ENCODE measurements at regions of chr22 and their contacts with region 1.

Region 1: GRCh38 chr22:30634471-30635233 is 929 bp upstream of the SLC35E4 start:
- DNase-seq: peak; percentile 78 to 85
- ATAC-seq: peak; percentile 75 to 77
- H3K4me3 ChIP-seq: peak overlapping the region; percentile 67 to 96 (median 78)
- H3K27ac ChIP-seq: peak overlapping the region; percentile 95 to 99 (median 98)
- H3K4me1 ChIP-seq: peaks cover 36 to 39% of the 10 kb centered on the region in 2 donors
- H3K27me3 ChIP-seq: no peaks in the 10 kb centered on the region
- CTCF ChIP-seq: peak; percentile 95 to 99 (median 97)
- POLR2A ChIP-seq: peak in 1 of 2 donors; percentile 54

Region 2: GRCh38 chr22:30386960-30387827 is 247.5 kb before region 1 on chr22 and contains the start of gene RNF215:
- in situ Hi-C with region 1: no loop called
- intact Hi-C with region 1: no loop called
- DNase-seq: peak; percentile 50 to 66
- ATAC-seq: peak; percentile 93 to 95
- H3K4me3 ChIP-seq: peak within 1 kb of the TSS; percentile 62 to 73 (median 66)
- H3K27ac ChIP-seq: peak within 1 kb of the TSS; percentile 58 to 71 (median 64)
- H3K4me1 ChIP-seq: peaks cover 7% of the 10 kb centered on the region in 2 donors
- H3K27me3 ChIP-seq: no peaks in the 10 kb centered on the region
- CTCF ChIP-seq: peak; percentile 86 to 98 (median 97)
- POLR2A ChIP-seq: no peak
- total RNA-seq, gene RNF215: 4.7 to 11.2 (median 8.1) TPM

Region 3: GRCh38 chr22:30606455-30607299 is 28.0 kb before region 1 on chr22 and contains the start of gene TCN2:
- in situ Hi-C with region 1: no loop called
- intact Hi-C with region 1: loop called (anchors 2 kb)
- DNase-seq: peak; percentile 63 to 69
- ATAC-seq: peak; percentile 87 to 88
- H3K4me3 ChIP-seq: peak within 1 kb of the TSS; percentile 68 to 84 (median 73)
- H3K27ac ChIP-seq: peak within 1 kb of the TSS; percentile 53 to 87 (median 76)
- H3K4me1 ChIP-seq: peaks cover 28 to 31% of the 10 kb centered on the region in 2 donors
- H3K27me3 ChIP-seq: no peaks in the 10 kb centered on the region
- CTCF ChIP-seq: peak in 1 of 5 experiments; percentile 29
- POLR2A ChIP-seq: peak; percentile 19 to 31
- total RNA-seq, gene TCN2: 5.1 to 12.8 (median 11.7) TPM

Region 4: GRCh38 chr22:30694171-30694639 is 59.6 kb after region 1 on chr22:
- in situ Hi-C with region 1: loop called in 1 of 4 experiments (anchors 10 kb)
- intact Hi-C with region 1: loop called (anchors 2 kb)
- DNase-seq: peak; percentile 25 to 40
- ATAC-seq: peak; percentile 70 to 71
- H3K4me3 ChIP-seq: peak overlapping the region; percentile 53 to 75 (median 67)
- H3K27ac ChIP-seq: peak overlapping the region; percentile 48 to 86 (median 74)
- H3K4me1 ChIP-seq: peaks cover 5 to 7% of the 10 kb centered on the region in 2 donors
- H3K27me3 ChIP-seq: no peaks in the 10 kb centered on the region
- CTCF ChIP-seq: no peak
- POLR2A ChIP-seq: no peak

Region 5: GRCh38 chr22:30910358-30910757 is 275.7 kb after region 1 on chr22:
- in situ Hi-C with region 1: loop called in 2 of 4 experiments (anchors 10 to 25 kb)
- intact Hi-C with region 1: no loop called
- DNase-seq: no peak
- ATAC-seq: no peak
- H3K4me3 ChIP-seq: no peak overlapping the region
- H3K27ac ChIP-seq: no peak overlapping the region
- H3K4me1 ChIP-seq: no peaks in the 10 kb centered on the region
- H3K27me3 ChIP-seq: no peaks in the 10 kb centered on the region
- CTCF ChIP-seq: no peak
- POLR2A ChIP-seq: no peak

Region 6: GRCh38 chr22:30968924-30969539 is 334.4 kb after region 1 on chr22 and contains the start of gene TUG1:
- in situ Hi-C with region 1: no loop called
- intact Hi-C with region 1: loop called (anchors 1 kb)
- DNase-seq: peak; percentile 99
- ATAC-seq: peak; percentile 91 to 94
- H3K4me3 ChIP-seq: peak within 1 kb of the TSS; percentile 61 to 95 (median 88)
- H3K27ac ChIP-seq: peak within 1 kb of the TSS; percentile 89 to 98 (median 98)
- H3K4me1 ChIP-seq: peaks cover 67 to 69% of the 10 kb centered on the region in 2 donors
- H3K27me3 ChIP-seq: no peaks in the 10 kb centered on the region
- CTCF ChIP-seq: peak in 2 of 5 experiments; percentile 32 to 33
- POLR2A ChIP-seq: peak; percentile 93 to 97
- total RNA-seq, gene TUG1: 14.3 to 23.9 (median 15.8) TPM

Region 7: DNA sequence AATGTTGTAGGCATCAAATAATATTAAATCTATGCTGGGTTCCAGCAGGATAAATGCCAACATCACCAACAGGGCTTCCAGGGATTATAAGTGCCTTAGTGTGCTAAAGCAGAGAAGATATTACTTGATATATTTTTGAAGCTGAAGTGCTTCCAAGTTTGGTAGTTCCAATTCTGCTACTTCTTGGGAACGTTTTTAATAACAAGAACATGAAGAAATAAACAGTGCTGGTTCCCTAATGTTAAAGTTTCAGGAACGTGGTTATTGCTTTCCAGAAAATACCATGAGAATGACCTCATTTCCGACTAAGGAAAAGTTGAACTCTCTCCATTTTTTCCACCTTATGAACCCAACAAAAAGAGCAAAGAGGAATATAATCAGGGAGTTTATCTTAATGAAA is 520.8 kb after region 1 on chr22:
- in situ Hi-C with region 1: no loop called
- intact Hi-C with region 1: loop called (anchors 1 kb)
- DNase-seq: no peak
- ATAC-seq: no peak
- H3K4me3 ChIP-seq: no peak overlapping the region
- H3K27ac ChIP-seq: peak overlapping the region; percentile 3 to 53 (median 32)
- H3K4me1 ChIP-seq: peaks cover 0 to 15% of the 10 kb centered on the region in 2 donors
- H3K27me3 ChIP-seq: no peaks in the 10 kb centered on the region
- CTCF ChIP-seq: no peak
- POLR2A ChIP-seq: no peak

Region 8: GRCh38 chr22:31290494-31291471 is 656.1 kb after region 1 on chr22:
- in situ Hi-C with region 1: no loop called
- intact Hi-C with region 1: loop called (anchors 1 kb)
- DNase-seq: peak; percentile 95 to 96
- ATAC-seq: peak; percentile 70 to 81
- H3K4me3 ChIP-seq: peak overlapping the region; percentile 56 to 89 (median 72)
- H3K27ac ChIP-seq: peak overlapping the region; percentile 91 to 100 (median 97)
- H3K4me1 ChIP-seq: peaks cover 42 to 48% of the 10 kb centered on the region in 2 donors
- H3K27me3 ChIP-seq: no peaks in the 10 kb centered on the region
- CTCF ChIP-seq: peak in 1 of 5 experiments; percentile 8
- POLR2A ChIP-seq: peak; percentile 98 to 100